ENCODE measurements at regions of chr19 and their contacts with region 1.

Region 1: DNA sequence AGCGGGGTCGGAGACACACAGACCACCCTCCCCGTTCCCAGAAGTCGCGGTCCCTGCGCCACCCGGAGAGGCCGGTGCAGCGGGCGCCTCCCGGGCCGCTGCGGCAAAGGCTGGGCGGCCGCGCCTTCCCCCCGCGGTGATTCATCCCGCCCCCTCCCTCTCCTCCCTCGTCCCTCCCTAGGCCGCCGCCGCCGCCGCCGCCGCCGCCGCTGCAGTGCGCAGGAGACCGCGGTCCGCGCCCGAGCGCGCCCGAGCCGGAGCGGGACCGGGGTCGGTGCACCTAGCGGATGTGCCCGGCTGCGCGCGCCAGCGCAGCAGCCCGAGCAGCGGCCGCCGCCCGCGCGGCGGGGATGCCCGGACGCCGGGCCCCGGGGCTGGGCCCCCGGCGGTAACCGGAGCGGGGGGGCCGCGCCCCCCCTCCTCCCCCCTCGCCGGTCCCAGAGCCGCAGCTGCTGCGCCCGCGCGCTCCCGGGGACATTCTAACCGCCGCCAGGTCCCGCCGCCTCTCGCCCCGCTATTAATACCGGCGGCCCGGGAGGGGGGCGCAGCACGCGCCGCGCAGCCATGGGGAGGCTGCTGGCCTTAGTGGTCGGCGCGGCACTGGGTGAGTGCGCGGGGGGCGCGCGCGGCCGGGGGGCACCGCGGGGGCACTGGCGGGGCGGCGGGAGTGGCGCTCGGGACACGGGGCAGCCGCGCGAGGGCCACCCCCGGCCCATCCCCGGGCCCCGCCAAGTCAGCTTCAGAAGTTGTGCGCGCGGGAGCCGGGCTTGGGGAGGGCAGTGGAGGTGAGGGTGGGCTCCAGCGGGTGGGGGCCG is at the start of gene SCN1B:
- DNase-seq: peak in 8 of 10 donors; percentile 20 to 49 (median 38)
- ATAC-seq: peak; percentile 71 to 85
- H3K4me3 Mint-ChIP-seq: peak within 1 kb of the TSS; percentile 58 to 92 (median 83)
- H3K27ac Mint-ChIP-seq: peak within 1 kb of the TSS in 7 of 10 donors; percentile 15 to 83 (median 40)
- H3K4me1 Mint-ChIP-seq: peaks cover 9 to 15% (median 13%) of the 10 kb centered on the region in 4 donors
- H3K27me3 Mint-ChIP-seq: peaks cover 3 to 13% (median 7%) of the 10 kb centered on the region in 5 donors
- polyA plus RNA-seq, gene SCN1B: 0.27 to 0.28 TPM in 2 of 3 donors, not detected in the other

Region 2: GRCh38 chr19:34999498-35000341 is 30.7 kb before region 1 on chr19 and contains the start of gene GRAMD1A:
- POLR2A ChIA-PET with region 1: interaction called, 13 read pairs
- DNase-seq: peak; percentile 37 to 75 (median 62)
- ATAC-seq: peak; percentile 14 to 22
- H3K4me3 Mint-ChIP-seq: peak within 1 kb of the TSS; percentile 95 to 100 (median 99)
- H3K27ac Mint-ChIP-seq: peak within 1 kb of the TSS; percentile 94 to 99 (median 98)
- H3K4me1 Mint-ChIP-seq: peaks cover 45 to 82% (median 78%) of the 10 kb centered on the region in 4 donors
- H3K27me3 Mint-ChIP-seq: no peaks in the 10 kb centered on the region
- polyA plus RNA-seq, gene GRAMD1A: 29.5 to 77.0 (median 42.0) TPM

Region 3: DNA sequence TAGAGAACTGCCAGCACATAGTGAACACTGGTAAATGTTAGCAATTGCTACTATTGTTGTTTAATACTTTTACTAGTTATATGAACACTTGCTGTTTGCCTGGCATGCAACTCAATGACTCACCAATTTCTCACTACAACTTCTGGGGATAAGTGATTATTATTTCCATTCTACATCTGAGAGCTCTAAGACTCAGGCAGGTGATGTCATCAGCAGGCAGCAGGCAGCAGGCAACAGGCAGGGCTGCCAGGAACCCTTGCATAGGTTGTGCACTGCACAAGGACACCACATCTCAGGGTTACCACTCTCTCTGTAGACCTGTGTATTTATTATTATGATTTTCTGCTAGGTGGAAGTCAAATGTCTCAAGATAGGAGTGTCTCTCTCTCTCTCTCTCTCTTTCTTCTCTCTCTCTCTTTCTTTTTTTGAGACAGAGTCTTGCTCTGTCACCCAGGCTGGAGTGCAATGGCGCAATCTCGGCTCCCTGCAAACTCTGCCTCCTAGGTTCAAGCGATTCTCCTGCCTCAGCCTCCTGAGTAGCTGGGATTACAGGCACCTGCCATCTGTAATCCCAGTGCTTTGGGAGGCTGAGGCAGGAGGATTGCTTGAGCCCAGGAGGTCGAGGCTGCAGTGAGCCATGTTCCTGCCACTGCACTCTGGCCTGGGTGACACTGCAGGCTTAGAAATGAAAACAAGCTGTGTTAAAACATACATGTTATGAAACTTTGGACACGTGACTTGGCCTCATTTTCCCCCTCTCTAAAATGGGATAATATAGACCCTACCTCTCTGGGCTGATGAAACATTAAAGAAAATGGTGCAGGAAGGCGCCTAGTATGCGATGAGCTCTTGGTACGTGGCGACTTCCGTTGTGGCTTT is 33.7 kb after region 1 on chr19:
- POLR2A ChIA-PET with region 1: no interaction called
- DNase-seq: no peak
- ATAC-seq: no peak
- H3K4me3 Mint-ChIP-seq: no peak overlapping the region
- H3K27ac Mint-ChIP-seq: peak overlapping the region in 1 of 10 donors; percentile 18
- H3K4me1 Mint-ChIP-seq: peaks cover 0 to 6% (median 5%) of the 10 kb centered on the region in 4 donors
- H3K27me3 Mint-ChIP-seq: peaks cover 0 to 2% (median 0%) of the 10 kb centered on the region in 5 donors